Activated T-helper 1 cell treated with anti-CD3 and anti-CD28 coated beads, Interleukin-12 subunit alpha, Interleukin-12 subunit beta, Interleukin-2, Interleukin-4 antibody, amounts not matched to agents 30 ng/mL and 10 ng/mL and 1 ng/mL, durations not matched to agents 14 hours and 24 hours and 36 hours (primary cell): ENCODE measurements at regions of chr1 and their contacts with region 1.

Region 1: DNA sequence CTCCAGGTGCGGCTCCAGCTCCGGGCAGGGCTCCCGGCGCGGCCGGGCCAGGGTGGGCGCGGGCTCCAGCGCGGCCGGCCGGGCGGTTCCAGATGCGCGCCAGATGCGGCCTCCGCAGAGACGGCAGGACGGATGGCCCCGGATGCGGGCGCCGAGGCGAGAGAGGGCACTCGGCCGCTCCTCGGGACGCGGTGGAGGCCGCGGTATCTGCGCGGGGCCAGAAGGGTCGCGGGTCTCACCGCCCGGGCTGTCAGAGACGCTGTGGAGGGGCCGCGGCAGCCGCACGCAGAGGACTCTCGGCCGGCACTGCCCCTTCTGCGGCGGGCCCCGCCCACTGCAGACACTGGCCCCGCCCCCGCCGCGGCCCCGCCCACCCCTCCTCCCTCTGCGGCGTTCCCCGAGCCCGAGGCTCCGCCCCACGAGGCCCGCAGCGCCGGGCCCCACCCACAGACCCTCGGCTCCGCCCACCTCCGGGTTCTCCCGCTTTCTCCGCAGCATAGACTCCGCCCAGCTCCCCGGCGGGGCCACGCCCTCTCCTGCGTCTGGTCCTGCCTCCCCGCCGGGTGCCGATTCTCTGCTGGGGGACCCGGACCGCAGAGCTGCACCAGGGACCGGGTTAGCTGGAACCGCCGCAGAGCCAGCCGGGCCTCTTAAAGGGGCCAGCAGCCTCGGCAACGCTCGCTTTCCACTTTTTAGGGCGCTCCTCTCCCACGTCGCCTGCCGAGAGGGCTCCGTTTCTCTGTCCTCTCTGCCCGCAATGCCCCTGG is at the start of gene IFFO2:
- DNase-seq: peak; percentile 97
- H3K4me3 Mint-ChIP-seq: peak within 1 kb of the TSS; percentile 89
- H3K27ac Mint-ChIP-seq: peak within 1 kb of the TSS; percentile 78
- H3K4me1 Mint-ChIP-seq: peaks cover 50% of the 10 kb centered on the region
- H3K27me3 Mint-ChIP-seq: peaks cover 26% of the 10 kb centered on the region
- total RNA-seq, gene IFFO2: 31.8 and 32.6 TPM in 2 replicates

Region 2: GRCh38 chr1:18875107-18875795 is 81.3 kb before region 1 on chr1:
- intact Hi-C with region 1: no loop called
- DNase-seq: peak; percentile 46
- H3K4me3 Mint-ChIP-seq: no peak overlapping the region
- H3K27ac Mint-ChIP-seq: no peak overlapping the region
- H3K4me1 Mint-ChIP-seq: no peaks in the 10 kb centered on the region
- H3K27me3 Mint-ChIP-seq: no peaks in the 10 kb centered on the region

Region 3: DNA sequence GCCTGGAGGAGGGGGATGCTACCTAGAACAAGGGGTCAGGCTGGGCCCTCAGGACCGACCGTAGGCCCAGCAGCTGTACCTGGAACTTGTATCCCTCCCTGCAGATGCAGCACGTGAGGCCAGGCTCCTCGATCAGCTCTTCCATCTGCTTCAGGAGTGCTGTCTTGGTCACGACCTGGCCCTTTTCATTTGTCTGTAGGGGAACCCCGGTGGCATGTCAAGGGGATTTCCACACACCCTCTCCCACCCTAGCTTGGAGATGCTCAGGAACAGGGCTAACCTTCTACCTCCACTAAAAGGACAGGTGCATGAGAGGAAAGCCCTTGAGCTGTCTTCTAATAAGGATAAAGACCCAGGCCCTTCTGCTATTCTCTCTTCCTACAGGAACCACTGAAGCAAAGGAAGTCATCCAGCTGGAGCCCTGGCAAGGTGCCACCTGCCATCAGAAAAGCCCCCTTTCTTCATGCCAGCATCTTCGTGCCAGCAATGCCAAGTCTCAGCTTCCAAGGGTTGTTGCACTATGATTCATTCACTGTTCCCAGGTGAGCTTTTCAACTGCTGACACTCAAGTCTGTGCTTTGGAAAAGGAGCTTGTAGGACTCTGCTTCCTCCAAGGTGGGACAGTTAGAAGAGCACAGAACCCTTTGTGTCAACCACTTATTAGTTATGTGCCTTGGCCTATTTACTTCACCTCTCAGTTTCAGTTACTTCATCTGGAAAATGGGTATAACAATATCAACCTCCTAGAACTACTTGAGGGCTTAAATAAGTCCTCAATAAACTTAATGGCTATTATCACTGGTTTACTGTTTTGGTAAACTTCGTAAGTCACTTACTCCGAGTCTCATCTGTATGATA is 131.4 kb after region 1 on chr1:
- intact Hi-C with region 1: loop called (anchors 5 kb)
- DNase-seq: peak; percentile 29
- H3K4me3 Mint-ChIP-seq: no peak overlapping the region
- H3K27ac Mint-ChIP-seq: peak overlapping the region; percentile 77
- H3K4me1 Mint-ChIP-seq: peaks cover 38% of the 10 kb centered on the region
- H3K27me3 Mint-ChIP-seq: no peaks in the 10 kb centered on the region

Region 4: DNA sequence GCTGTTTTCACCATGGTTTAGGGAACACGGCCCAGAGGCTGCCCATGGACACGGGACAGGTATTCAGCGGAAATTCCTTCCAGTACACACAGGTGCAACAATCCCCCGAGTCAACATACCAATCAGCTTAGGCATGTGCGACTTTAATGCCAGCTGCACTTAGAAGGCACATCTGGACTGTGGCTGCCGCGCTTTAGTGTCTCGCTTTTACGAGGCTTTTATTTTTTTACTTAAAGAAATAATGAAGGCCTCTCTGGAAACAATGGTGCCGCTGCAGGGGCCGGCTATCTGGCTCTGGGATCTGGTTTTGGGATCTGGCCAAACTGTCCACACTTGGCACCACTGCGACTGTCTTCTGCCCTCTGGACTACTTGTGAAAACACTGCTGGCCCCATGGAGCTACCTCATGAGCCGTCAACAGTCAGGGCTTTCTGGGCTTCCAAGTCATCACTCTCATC is 411.1 kb after region 1 on chr1:
- intact Hi-C with region 1: no loop called
- DNase-seq: no peak
- H3K4me3 Mint-ChIP-seq: no peak overlapping the region
- H3K27ac Mint-ChIP-seq: no peak overlapping the region
- H3K4me1 Mint-ChIP-seq: no peaks in the 10 kb centered on the region
- H3K27me3 Mint-ChIP-seq: no peaks in the 10 kb centered on the region